Head of caudate nucleus (tissue), 42 donors: ENCODE measurements at regions of chr6 and their contacts with region 1.

Region 1: GRCh38 chr6:145734486-145735355 is 599 bp downstream of the EPM2A start:
- DNase-seq: peak; percentile 73 to 94 (median 86)

Region 2: DNA sequence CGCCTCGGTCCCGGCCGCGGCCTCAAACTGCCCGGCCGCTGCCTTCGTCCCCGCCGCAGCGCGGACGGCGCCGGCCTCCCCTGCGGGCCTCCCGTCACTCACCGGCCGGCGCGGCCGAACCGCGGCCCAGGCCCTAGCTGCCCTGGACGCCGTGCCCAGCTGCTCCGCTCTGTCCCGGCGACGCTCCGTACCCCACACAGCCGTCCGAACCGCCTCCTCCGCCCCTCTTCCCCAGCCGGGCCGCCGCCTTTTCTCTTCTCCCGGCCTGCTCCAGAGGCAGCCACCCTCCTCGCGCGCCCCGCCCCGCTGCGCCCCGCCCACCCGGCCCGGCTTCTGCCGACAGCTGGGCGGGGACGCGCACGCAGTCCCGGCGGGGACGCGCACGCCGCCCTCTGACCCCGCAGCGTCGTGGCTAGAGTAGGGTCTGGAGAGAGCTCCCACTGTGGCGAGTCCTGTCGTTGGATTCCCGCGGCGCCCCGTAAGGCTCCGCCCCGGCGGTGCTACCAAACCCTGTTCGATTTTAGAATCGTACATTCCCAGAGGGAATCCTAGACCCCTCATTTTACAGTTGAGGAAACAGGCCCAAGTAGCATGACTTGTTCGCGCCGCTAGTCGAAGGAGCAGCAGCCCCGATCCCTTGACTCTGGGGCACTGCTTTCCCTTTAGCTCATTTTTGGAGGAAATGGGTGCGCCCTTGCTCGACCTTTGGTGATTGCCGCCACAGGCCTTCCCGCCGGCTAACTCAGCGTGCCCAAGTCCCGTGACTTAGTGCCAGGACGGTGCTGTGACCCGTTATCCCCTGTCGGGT is 80.0 kb after region 1 on chr6 and contains the start of gene FBXO30:
- intact Hi-C with region 1: loop called (anchors 2 kb)
- DNase-seq: peak; percentile 72 to 95 (median 90)

Region 3: GRCh38 chr6:145866456-145867396 is 132.0 kb after region 1 on chr6:
- intact Hi-C with region 1: no loop called
- DNase-seq: no peak